ENCODE measurements at regions of chr1 and their contacts with region 1.

Region 1: DNA sequence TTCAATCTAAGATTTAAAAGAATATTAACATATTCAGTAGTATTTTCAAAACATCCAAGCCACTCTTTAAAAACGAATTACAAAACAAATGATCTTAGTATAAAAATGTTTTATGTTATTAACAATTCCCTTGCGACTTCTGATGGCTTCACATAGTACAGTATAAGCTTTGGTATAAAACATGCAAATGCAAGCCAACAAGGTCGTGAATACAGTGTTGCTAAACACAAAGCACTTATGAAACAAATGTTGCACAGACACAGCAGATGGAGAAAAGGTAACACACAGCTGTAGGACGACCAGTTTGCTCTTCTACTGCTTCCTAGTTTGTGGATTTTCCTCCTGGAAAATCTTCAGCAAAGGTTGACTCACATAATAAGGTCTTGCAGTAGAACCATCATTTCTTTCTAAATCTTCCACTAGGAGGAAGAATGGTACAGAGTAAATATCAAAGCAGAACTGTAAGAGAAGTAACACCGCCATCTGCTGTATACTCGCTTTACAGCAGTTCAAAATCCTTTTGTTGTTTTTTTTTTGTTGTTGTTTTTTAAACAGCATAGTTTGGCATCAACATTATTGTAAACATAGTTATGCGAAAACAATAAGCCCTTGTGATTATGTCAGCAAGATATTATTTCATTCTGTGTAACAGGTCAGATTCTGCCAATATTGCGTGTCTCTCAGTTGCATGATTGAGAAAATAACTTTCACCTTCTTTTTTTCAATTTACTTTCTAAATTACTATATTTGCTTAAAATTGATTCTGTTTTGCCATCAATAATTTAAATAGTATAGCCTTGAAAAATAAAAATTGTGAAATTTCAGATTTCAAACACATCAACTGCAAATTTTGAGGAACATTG is 69.5 kb downstream of the LHX8 start:
- DNase-seq: peak; percentile 33
- H3K4me3 ChIP-seq: peak overlapping the region in 1 of 2 experiments; percentile 42; a peak in 1 of 4 replicates
- H3K27ac ChIP-seq: no peak overlapping the region
- H3K4me1 ChIP-seq: no peaks in the 10 kb centered on the region
- H3K27me3 ChIP-seq: no peaks in the 10 kb centered on the region; the same call in 1 of the 2 replicates
- CTCF ChIP-seq: peak; percentile 97
- EP300 ChIP-seq: no peak
- RAD21 ChIP-seq: peak; percentile 93

Region 2: DNA sequence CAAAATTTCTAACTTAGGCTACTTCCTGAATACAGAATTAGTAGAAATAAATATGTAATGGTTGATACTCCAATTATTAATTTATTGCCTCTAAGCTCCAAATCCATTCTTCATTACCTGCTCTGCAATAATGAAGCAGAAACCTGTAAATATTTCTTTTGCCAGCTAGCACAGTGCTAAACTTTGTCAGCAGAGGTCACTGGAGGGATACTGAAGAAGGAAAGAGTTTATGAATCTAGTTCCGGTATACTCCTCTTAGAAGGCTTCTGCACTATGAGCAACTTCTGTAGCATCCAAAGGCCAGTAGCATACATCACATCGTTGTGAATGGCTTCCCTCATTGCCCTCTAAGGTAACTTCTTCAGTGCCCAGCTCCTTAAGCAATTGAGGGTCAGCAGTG is 150.4 kb before region 1 on chr1:
- CTCF ChIA-PET with region 1: interaction called, 23 read pairs
- POLR2A ChIA-PET with region 1: no interaction called
- DNase-seq: no peak
- H3K4me3 ChIP-seq: no peak overlapping the region
- H3K27ac ChIP-seq: no peak overlapping the region
- H3K4me1 ChIP-seq: no peaks in the 10 kb centered on the region
- H3K27me3 ChIP-seq: no peaks in the 10 kb centered on the region
- CTCF ChIP-seq: peak; percentile 59
- EP300 ChIP-seq: no peak
- RAD21 ChIP-seq: peak; percentile 64

Region 3: GRCh38 chr1:75134647-75135572 is 68.7 kb before region 1 on chr1:
- CTCF ChIA-PET with region 1: interaction called, 27 read pairs
- POLR2A ChIA-PET with region 1: no interaction called
- DNase-seq: peak; percentile 38
- H3K4me3 ChIP-seq: no peak overlapping the region; a peak in 1 of 4 replicates
- H3K27ac ChIP-seq: no peak overlapping the region
- H3K4me1 ChIP-seq: peaks cover 0 to 21% of the 10 kb centered on the region in 2 experiments; a peak in 2 of 4 replicates
- H3K27me3 ChIP-seq: peaks cover 88% of the 10 kb centered on the region
- CTCF ChIP-seq: no peak
- EP300 ChIP-seq: no peak
- RAD21 ChIP-seq: no peak

Region 4: GRCh38 chr1:75170981-75171380 is 32.7 kb before region 1 on chr1:
- CTCF ChIA-PET with region 1: interaction called, 16 read pairs
- POLR2A ChIA-PET with region 1: no interaction called
- DNase-seq: no peak
- H3K4me3 ChIP-seq: no peak overlapping the region
- H3K27ac ChIP-seq: no peak overlapping the region
- H3K4me1 ChIP-seq: no peaks in the 10 kb centered on the region; a peak in 1 of 4 replicates
- H3K27me3 ChIP-seq: no peaks in the 10 kb centered on the region
- CTCF ChIP-seq: no peak
- EP300 ChIP-seq: no peak
- RAD21 ChIP-seq: no peak

Measured in SK-N-SH (cell line).